ENCODE measurements at regions of chr15 and their contacts with region 1.

Region 1: DNA sequence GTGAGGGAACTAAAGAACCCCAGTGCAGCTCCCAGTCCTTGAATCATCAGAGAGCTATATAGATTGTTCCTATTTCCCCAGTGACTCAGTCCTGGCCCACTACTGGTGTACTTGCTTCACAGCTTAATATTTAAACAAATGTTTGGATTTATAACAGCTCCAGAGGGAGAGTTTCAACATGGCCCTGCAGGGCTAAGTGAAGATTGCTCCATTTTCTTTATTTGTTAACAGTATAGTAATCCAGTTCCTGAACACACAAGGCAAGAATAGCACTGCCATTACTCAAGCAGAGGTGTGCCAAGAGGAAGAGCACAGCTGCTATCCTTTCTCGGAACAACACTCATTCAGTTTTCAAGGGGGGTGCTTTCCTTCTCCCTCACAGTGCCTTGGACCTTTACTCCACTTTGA is 6.5 kb downstream of the SQOR start:
- DNase-seq: peak; percentile 70 to 92 (median 90)
- H3K4me3 ChIP-seq: peak overlapping the region in 1 of 3 experiments; percentile 52
- H3K4me3 Mint-ChIP-seq: peak overlapping the region in 1 of 2 donors; percentile 86
- H3K27ac ChIP-seq: peak overlapping the region; percentile 46 to 91
- H3K27ac Mint-ChIP-seq: peak overlapping the region; percentile 87 to 97 (median 93)
- H3K4me1 ChIP-seq: peaks cover 97 to 98% of the 10 kb centered on the region in 2 donors
- H3K4me1 Mint-ChIP-seq: peaks cover 98% of the 10 kb centered on the region
- H3K27me3 ChIP-seq: no peaks in the 10 kb centered on the region
- H3K27me3 Mint-ChIP-seq: no peaks in the 10 kb centered on the region
- CTCF ChIP-seq: no peak

Region 2: GRCh38 chr15:45604326-45604725 is 37.1 kb before region 1 on chr15:
- intact Hi-C with region 1: loop called (anchors 5 kb)
- DNase-seq: peak in 2 of 3 donors; percentile 55 to 58
- H3K4me3 ChIP-seq: peak overlapping the region in 1 of 3 experiments; percentile 18
- H3K4me3 Mint-ChIP-seq: peak overlapping the region in 1 of 2 donors; percentile 12
- H3K27ac ChIP-seq: peak overlapping the region in 1 of 2 donors; percentile 72
- H3K27ac Mint-ChIP-seq: peak overlapping the region; percentile 76 to 94 (median 91)
- H3K4me1 ChIP-seq: peaks cover 37 to 46% of the 10 kb centered on the region in 2 donors
- H3K4me1 Mint-ChIP-seq: peaks cover 36% of the 10 kb centered on the region
- H3K27me3 ChIP-seq: no peaks in the 10 kb centered on the region
- H3K27me3 Mint-ChIP-seq: no peaks in the 10 kb centered on the region
- CTCF ChIP-seq: no peak

Region 3: DNA sequence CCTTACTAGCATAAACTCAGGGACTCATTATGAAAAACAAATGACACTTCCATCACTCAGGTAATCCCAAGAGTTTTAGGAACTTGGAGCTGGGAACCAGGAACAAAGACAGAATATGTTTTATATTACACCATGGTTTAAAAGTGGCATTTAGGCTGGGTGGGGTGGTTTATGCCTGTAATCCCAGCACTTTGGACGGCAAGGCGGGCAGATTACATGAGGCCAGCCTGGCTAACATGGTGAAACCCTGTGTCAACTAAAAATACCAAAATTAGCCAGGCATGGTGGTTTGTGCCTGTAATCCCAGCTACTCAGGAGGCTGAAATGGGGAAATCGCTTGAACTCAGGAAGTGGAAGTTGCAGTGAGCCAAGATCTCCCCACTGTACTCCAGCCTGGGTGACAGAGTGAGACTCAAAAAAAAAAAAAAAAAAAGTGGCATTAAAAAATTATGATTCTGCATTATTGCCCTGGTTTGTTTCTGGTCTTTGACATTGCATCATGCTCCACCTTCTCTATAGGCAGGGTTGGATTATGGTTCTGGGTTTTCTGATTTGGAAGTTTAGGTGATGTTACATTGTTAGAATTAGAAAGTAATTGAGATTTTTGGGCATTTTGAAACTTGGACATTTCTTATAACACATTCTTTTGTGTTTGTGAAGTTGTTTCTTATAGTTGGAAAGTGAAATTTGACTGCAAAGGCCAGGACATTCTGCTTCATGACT is 12.5 kb after region 1 on chr15:
- intact Hi-C with region 1: loop called in 1 of 2 experiments (anchors 1 kb)
- DNase-seq: peak; percentile 65 to 88 (median 77)
- H3K4me3 ChIP-seq: peak overlapping the region in 1 of 3 experiments; percentile 7
- H3K4me3 Mint-ChIP-seq: peak overlapping the region in 1 of 2 donors; percentile 66
- H3K27ac ChIP-seq: peak overlapping the region; percentile 65 to 77
- H3K27ac Mint-ChIP-seq: peak overlapping the region; percentile 76 to 93 (median 91)
- H3K4me1 ChIP-seq: peaks cover 44 to 54% of the 10 kb centered on the region in 2 donors
- H3K4me1 Mint-ChIP-seq: peaks cover 67% of the 10 kb centered on the region
- H3K27me3 ChIP-seq: no peaks in the 10 kb centered on the region
- H3K27me3 Mint-ChIP-seq: no peaks in the 10 kb centered on the region
- CTCF ChIP-seq: no peak